ENCODE measurements at regions of chr6 and their contacts with region 1.

Region 1: DNA sequence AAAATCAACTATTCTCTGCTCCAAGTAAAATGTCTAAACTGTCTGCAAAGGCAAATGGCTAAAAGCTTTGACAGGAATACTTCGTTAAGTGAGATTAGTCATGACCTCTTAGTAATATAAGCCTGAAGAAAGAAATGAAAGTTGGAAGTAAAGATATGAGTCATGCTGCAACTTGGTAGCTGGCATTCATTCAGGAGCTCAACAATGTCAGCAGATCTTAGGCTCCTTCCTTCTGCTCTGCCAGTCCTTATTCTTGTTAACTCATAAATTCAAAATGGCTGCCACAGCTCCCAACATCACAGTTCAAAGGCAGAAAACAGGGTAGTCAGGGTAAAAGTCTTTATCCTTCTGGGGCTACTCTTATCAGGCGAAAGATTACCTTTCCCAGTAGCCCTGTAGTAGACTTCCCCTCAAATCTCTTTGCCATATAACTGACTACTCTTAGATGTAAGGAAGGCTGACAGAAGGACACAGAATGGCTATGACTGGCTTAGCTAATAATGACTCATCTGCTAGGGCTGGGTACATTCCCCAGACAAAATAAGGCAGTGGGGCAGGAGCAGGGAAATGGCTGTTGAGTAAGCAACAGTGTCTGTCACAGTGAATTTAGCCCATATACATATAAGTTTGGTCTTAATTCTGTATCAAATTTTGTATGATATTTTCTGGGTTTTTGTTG is 24.4 kb upstream of the C6orf62 start:
- DNase-seq: no peak
- H3K4me3 Mint-ChIP-seq: no peak overlapping the region
- H3K27ac Mint-ChIP-seq: peak overlapping the region; percentile 79
- H3K4me1 Mint-ChIP-seq: peaks cover 19% of the 10 kb centered on the region
- H3K27me3 Mint-ChIP-seq: no peaks in the 10 kb centered on the region

Region 2: GRCh38 chr6:24451581-24452388 is 291.6 kb before region 1 on chr6:
- intact Hi-C with region 1: no loop called
- DNase-seq: no peak
- H3K4me3 Mint-ChIP-seq: no peak overlapping the region
- H3K27ac Mint-ChIP-seq: no peak overlapping the region
- H3K4me1 Mint-ChIP-seq: no peaks in the 10 kb centered on the region
- H3K27me3 Mint-ChIP-seq: no peaks in the 10 kb centered on the region

Region 3: DNA sequence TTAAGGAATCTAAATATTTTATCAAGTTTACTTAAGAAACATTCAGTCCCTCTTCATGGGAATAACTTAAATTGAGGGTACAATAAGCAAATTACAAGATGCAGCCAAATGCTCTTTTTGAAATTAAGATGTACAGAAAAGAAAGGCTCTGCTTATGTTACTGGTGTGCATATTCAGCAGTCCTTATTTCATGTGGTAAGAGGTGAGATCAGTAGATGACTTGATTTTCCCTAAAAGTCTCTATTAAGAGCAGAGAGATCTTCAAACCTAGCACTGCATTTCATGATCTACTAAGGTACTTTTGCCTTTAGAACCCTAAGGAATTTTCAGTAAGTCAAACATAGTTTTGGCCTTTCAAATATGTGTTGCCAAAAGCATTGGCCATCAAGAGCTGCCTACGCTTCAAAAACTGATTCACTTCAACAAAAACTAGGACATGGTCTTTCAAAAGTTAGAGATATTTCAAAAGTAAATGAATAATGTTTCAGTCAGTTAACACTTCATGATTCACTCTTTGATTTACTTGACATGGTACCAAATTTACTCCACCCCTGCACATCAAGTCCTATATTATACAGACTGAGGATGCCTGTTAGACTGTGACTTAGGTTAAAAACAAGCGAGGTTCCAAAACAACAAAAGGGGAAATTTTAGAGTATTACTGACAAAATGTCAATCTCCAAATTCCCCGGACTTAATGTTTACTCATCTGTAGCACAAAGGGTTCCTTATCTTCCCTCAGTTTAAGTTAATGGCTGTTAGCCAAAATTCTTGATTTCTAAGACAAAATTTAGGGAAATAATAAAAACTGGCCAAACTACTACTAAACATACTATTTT is 43.7 kb before region 1 on chr6:
- intact Hi-C with region 1: no loop called
- DNase-seq: no peak
- H3K4me3 Mint-ChIP-seq: no peak overlapping the region
- H3K27ac Mint-ChIP-seq: peak overlapping the region; percentile 60
- H3K4me1 Mint-ChIP-seq: peaks cover 14% of the 10 kb centered on the region
- H3K27me3 Mint-ChIP-seq: no peaks in the 10 kb centered on the region

Region 4: GRCh38 chr6:24774696-24775519 is 31.5 kb after region 1 on chr6 and contains the start of gene GMNN:
- intact Hi-C with region 1: loop called (anchors 2 kb)
- DNase-seq: peak; percentile 95
- H3K4me3 Mint-ChIP-seq: peak within 1 kb of the TSS; percentile 98
- H3K27ac Mint-ChIP-seq: peak within 1 kb of the TSS; percentile 98
- H3K4me1 Mint-ChIP-seq: peaks cover 30% of the 10 kb centered on the region
- H3K27me3 Mint-ChIP-seq: no peaks in the 10 kb centered on the region
- total RNA-seq, gene GMNN: 68.5 and 71.5 TPM in 2 replicates

Measured in activated T-helper 2 cell treated with anti-CD3 and anti-CD28 coated beads, Interferon-gamma antibody, Interleukin-2, Interleukin-4, amounts not matched to agents 10 μg/mL and 5 μg/mL and 100 μg/mL, durations not matched to agents 14 hours and 24 hours and 36 hours (primary cell).